ENCODE measurements at regions of chr11 and their contacts with region 1.

Region 1: GRCh38 chr11:93039531-93040240 is 70.2 kb downstream of the MTNR1B start:
- DNase-seq: no peak
- H3K4me3 ChIP-seq: no peak overlapping the region
- H3K27ac ChIP-seq: no peak overlapping the region
- H3K4me1 ChIP-seq: no peaks in the 10 kb centered on the region
- H3K27me3 ChIP-seq: no peaks in the 10 kb centered on the region
- CTCF ChIP-seq: no peak
- EP300 ChIP-seq: no peak
- POLR2A ChIP-seq: no peak

Region 2: GRCh38 chr11:92589512-92589911 is 450.2 kb before region 1 on chr11:
- in situ Hi-C with region 1: no loop called
- intact Hi-C with region 1: loop called (anchors 5 kb)
- DNase-seq: no peak
- H3K4me3 ChIP-seq: no peak overlapping the region
- H3K27ac ChIP-seq: no peak overlapping the region
- H3K4me1 ChIP-seq: no peaks in the 10 kb centered on the region
- H3K27me3 ChIP-seq: no peaks in the 10 kb centered on the region
- CTCF ChIP-seq: no peak
- EP300 ChIP-seq: no peak
- POLR2A ChIP-seq: no peak